AG04450 (cell line): ENCODE measurements at regions of chr5 and their contacts with region 1.

Region 1: GRCh38 chr5:181223058-181223728 is at the start of gene TRIM41:
- DNase-seq: peak; percentile 98
- H3K4me3 ChIP-seq: peak within 1 kb of the TSS; percentile 94
- H3K27ac ChIP-seq: peak within 1 kb of the TSS; percentile 96
- H3K27me3 ChIP-seq: no peaks in the 10 kb centered on the region
- CTCF ChIP-seq: no peak; the same call in 1 of the 2 replicates
- polyA plus RNA-seq, gene TRIM41: 11.5 and 12.3 TPM in 2 replicates

Region 2: DNA sequence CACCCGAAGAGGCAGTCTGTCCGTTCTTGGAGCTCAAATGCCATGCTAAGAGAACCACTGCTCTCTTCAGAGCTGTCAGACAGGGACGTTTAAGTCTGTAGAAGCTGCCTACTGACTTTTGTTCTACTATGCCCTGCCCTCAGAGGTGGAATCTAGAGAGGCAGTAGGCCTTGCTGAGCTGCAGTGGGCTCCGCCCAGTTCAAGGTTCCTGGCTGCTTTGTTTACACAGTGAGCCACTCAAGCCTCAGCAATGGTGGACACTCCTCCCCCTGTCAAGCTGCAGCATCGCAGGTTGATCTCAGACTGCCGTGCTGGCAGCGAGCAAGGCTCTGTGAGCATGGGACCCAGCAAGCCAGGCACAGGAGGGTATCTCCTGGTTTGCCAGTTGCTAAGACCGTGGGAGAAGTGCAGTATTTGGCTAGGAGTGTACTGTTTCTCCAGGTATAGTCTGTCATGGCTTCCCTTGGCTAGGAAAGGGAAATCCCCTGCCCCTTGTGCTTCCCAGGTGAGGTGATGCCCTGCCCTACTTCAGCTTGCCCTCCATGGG is 337.2 kb before region 1 on chr5:
- CTCF ChIA-PET with region 1: no interaction called
- POLR2A ChIA-PET with region 1: no interaction called
- DNase-seq: no peak
- H3K4me3 ChIP-seq: no peak overlapping the region
- H3K27ac ChIP-seq: no peak overlapping the region
- H3K27me3 ChIP-seq: no peaks in the 10 kb centered on the region
- CTCF ChIP-seq: no peak

Region 3: GRCh38 chr5:181149806-181150733 is 73.1 kb before region 1 on chr5:
- CTCF ChIA-PET with region 1: no interaction called
- POLR2A ChIA-PET with region 1: no interaction called
- DNase-seq: no peak
- H3K4me3 ChIP-seq: no peak overlapping the region
- H3K27ac ChIP-seq: no peak overlapping the region
- H3K27me3 ChIP-seq: peaks cover 2% of the 10 kb centered on the region
- CTCF ChIP-seq: no peak

Region 4: DNA sequence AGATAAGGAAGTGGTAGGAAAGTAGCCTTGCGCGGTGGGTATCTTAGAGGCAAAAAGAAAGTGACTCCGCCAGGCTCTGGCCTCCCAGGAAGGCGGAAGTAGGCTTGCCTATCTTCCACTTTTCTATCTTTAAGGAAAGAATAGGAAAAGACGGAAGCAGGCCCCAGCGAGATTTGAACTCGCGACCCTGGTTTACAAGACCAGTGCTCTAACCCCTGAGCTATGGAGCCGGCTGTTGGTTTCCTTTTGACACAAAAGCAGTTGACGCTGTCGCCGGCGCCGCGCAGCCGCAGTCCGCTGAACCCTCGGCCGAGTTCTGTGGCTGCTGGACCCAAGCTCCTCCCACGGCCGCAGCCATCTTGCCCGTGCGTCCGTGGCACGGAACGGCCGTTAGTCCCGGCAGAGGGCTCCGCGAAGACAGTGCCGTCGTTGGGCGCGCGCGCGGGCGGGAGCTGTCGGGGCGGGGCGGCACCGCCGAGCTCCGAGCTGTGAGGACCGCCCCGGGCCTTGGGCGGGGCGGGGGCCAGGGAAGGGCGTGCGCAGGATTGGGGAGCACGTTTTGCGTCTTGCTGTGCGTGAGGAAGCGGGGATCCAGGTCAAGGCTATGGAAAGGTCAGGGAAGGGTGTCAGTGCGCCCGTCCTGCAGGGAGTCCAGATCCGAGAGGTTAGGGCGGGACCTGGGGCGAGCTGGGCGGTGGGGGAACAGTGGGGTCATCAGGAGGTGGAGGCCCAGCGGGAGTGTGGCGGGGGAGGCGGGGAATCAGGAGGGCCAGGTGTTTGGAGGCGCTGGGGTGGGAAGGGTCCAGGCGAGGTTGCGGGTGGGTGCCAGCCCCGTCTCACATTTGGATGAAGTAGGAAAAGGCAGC is 31.4 kb before region 1 on chr5:
- CTCF ChIA-PET with region 1: no interaction called
- POLR2A ChIA-PET with region 1: interaction called, 12 read pairs
- DNase-seq: peak; percentile 89
- H3K4me3 ChIP-seq: peak overlapping the region; percentile 90
- H3K27ac ChIP-seq: peak overlapping the region; percentile 52
- H3K27me3 ChIP-seq: no peaks in the 10 kb centered on the region
- CTCF ChIP-seq: no peak

Region 5: GRCh38 chr5:181207214-181208107 is 15.7 kb before region 1 on chr5:
- CTCF ChIA-PET with region 1: interaction called, 3 read pairs
- POLR2A ChIA-PET with region 1: interaction called, 25 read pairs
- DNase-seq: peak; percentile 78
- H3K4me3 ChIP-seq: peak overlapping the region; percentile 68
- H3K27ac ChIP-seq: peak overlapping the region; percentile 73
- H3K27me3 ChIP-seq: no peaks in the 10 kb centered on the region
- CTCF ChIP-seq: no peak

Region 6: DNA sequence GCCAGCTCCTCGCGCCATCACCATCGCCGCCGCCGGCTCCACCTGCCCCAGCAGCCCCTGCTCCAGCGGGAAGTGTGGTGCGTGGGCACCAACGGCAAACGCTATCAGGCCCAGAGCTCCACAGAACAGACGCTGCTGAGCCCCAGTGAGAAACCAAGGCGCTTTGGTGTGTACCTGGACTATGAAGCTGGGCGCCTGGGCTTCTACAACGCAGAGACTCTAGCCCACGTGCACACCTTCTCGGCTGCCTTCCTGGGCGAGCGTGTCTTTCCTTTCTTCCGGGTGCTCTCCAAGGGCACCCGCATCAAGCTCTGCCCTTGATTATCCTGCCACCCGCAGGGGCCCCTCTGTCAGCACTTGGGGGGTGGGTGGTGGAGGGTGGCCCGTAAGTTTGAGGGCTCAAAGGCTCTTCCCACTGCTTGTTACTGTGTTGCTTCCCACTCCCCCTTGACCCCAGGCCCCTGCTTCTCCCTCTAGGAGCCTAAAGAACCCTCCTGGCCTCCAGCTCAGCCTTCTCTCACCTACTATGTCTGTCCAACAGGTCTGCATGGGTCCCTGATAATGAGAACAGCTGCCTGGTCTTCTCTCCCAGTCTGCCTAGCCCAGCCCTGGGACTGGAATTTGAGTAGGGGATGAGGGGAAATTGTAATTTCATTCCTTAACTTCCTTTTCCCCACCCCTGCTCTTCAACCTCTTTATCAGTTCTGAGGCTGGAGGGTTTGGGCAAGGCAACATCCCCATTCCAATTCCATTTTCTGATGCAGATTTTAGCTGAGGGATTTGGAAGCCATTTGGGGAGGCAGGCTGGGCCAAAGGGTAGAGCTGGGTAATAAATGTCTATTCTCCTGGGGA is 11.5 kb after region 1 on chr5:
- CTCF ChIA-PET with region 1: no interaction called
- POLR2A ChIA-PET with region 1: interaction called, 15 read pairs
- DNase-seq: no peak
- H3K4me3 ChIP-seq: no peak overlapping the region
- H3K27ac ChIP-seq: peak overlapping the region; percentile 47
- H3K27me3 ChIP-seq: no peaks in the 10 kb centered on the region
- CTCF ChIP-seq: no peak

Region 7: GRCh38 chr5:181243512-181244343 is 20.5 kb after region 1 on chr5 and contains the start of gene RACK1:
- CTCF ChIA-PET with region 1: no interaction called
- POLR2A ChIA-PET with region 1: interaction called, 24 read pairs
- DNase-seq: peak; percentile 67
- H3K4me3 ChIP-seq: peak within 1 kb of the TSS; percentile 98
- H3K27ac ChIP-seq: peak within 1 kb of the TSS; percentile 94
- H3K27me3 ChIP-seq: no peaks in the 10 kb centered on the region
- CTCF ChIP-seq: no peak
- polyA plus RNA-seq, gene RACK1: 4,422 and 6,028 TPM in 2 replicates